H1 (cell line): ENCODE measurements at regions of chrX and their contacts with region 1.

Region 1: DNA sequence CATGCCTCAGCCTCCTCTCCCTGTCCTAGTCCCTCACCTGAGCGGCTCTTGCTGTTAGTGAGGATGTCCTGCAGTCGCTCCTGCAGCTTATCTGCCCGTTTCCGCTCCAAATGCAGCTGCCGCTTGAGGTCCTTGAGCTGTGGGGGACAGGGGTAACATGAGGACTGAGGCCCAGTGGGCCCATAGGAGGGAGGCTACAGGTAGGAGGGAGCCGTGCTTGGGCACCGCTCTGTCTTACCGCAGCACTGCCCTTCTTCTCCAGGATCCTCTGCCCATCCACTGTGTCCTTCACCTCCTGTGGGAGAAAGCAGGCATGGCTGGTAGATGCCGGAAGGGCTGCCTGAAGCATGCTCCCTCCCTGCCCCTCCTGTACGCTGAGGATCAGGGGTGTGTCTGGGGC is 9.5 kb upstream of the KCND1 start:
- DNase-seq: no peak
- H3K4me3 ChIP-seq: no peak overlapping the region
- H3K27ac ChIP-seq: no peak overlapping the region
- H3K4me1 ChIP-seq: no peaks in the 10 kb centered on the region
- H3K27me3 ChIP-seq: no peaks in the 10 kb centered on the region
- CTCF ChIP-seq: no peak
- EP300 ChIP-seq: no peak
- POLR2A ChIP-seq: no peak
- RAD21 ChIP-seq: no peak

Region 2: GRCh38 chrX:48965959-48966358 is 15.2 kb before region 1 on chrX:
- CTCF ChIA-PET with region 1: no interaction called
- POLR2A ChIA-PET with region 1: no interaction called
- DNase-seq: no peak
- H3K4me3 ChIP-seq: no peak overlapping the region
- H3K27ac ChIP-seq: no peak overlapping the region
- H3K4me1 ChIP-seq: no peaks in the 10 kb centered on the region; a peak in 1 of 7 replicates
- H3K27me3 ChIP-seq: no peaks in the 10 kb centered on the region
- CTCF ChIP-seq: no peak
- EP300 ChIP-seq: no peak
- POLR2A ChIP-seq: no peak
- RAD21 ChIP-seq: no peak

Region 3: DNA sequence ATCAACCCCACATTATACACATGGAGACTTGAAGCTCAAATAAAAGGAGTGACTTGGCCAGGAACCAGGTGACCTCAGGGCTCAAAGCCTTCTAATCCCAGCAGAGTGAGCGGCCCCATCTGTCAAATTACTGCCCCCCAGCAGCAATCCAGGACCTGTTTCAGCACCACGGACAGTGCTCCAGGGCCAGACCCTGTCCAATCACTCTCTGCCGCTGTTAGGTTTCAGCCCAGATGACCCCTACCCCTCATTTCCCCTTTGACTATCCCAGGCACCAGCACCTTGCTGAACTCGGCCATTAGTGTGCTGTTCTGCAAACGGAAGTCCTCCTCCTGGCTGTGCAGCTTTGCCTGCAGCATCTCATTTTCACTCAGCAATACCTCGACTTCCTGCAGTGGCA is 15.8 kb after region 1 on chrX:
- CTCF ChIA-PET with region 1: interaction called, 3 read pairs
- POLR2A ChIA-PET with region 1: interaction called, 11 read pairs
- DNase-seq: peak in 1 of 2 experiments; percentile 45
- H3K4me3 ChIP-seq: no peak overlapping the region
- H3K27ac ChIP-seq: no peak overlapping the region
- H3K4me1 ChIP-seq: peaks cover 0 to 3% (median 0%) of the 10 kb centered on the region in 4 experiments; a peak in 1 of 7 replicates
- H3K27me3 ChIP-seq: no peaks in the 10 kb centered on the region
- CTCF ChIP-seq: no peak
- EP300 ChIP-seq: no peak
- POLR2A ChIP-seq: no peak
- RAD21 ChIP-seq: no peak